ENCODE measurements at regions of chr3 and their contacts with region 1.

Region 1: DNA sequence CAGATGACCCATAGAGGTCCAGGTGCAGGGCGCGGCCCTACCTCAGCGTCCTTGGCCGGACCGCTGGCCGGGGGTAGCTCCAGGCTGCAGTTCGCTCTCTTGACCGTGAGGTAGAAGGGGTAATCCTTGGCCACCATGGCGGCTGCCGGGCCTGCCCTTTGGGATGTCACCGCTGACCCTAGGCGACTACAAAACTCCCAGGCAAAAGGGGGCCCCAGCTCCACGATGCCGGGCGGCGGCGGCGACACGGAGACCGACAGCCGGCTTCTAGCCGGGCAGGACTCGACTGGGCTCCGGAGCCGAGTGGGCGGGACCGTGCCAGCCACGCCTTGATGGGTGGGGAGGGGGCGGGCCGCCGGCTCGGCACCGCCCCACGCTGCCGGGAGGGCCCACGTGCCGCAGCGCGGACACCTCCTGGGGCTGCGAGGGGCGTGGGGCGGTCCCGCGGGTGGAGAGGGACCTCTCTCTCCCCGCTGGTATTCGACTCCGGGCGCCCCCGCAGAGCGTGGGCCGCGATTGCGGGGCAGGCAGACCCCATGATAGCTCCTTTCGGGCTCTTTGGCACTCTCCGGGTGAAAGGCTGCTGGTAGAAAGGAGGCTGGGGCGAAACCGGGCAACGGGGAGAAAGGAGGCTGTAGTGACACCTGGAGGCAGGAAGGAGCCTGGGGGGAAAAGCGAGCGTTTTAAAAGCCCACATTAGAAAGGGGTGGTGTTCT is at the start of gene ARHGEF3:
- DNase-seq: peak; percentile 87 to 94 (median 91)
- ATAC-seq: peak; percentile 96
- H3K4me3 ChIP-seq: peak within 1 kb of the TSS; percentile 28
- H3K4me1 ChIP-seq: peaks cover 14% of the 10 kb centered on the region
- CTCF ChIP-seq: peak; percentile 31
- total RNA-seq, gene ARHGEF3: 10.1 to 34.5 (median 15.5) TPM

Region 2: DNA sequence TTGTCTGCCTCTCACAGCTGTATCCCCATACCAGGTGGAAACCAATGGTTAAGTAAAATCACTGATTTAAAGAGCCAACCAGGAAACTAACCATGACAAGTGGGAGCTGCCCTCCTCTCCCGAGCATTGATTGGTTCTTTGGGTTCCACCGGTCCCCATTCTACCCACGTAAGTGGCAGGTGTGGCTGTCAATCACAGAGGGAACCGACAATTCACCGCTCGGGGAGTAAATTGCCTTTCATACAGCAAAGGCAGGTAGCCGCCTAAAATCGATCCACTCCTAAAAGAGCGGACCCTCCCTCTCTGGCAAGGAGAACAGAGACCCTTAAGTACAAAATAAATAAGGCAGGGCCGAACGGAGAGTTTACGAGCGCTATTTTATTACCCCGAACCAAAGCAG is 334.7 kb before region 1 on chr3:
- intact Hi-C with region 1: no loop called
- DNase-seq: peak; percentile 61 to 80 (median 76)
- ATAC-seq: peak; percentile 94
- H3K4me3 ChIP-seq: no peak overlapping the region
- H3K4me1 ChIP-seq: peaks cover 3% of the 10 kb centered on the region
- CTCF ChIP-seq: no peak

Region 3: GRCh38 chr3:56694867-56695683 is 106.7 kb before region 1 on chr3:
- intact Hi-C with region 1: loop called (anchors 5 kb)
- DNase-seq: no peak
- ATAC-seq: peak; percentile 44
- H3K4me3 ChIP-seq: no peak overlapping the region
- H3K4me1 ChIP-seq: no peaks in the 10 kb centered on the region
- CTCF ChIP-seq: no peak

Region 4: DNA sequence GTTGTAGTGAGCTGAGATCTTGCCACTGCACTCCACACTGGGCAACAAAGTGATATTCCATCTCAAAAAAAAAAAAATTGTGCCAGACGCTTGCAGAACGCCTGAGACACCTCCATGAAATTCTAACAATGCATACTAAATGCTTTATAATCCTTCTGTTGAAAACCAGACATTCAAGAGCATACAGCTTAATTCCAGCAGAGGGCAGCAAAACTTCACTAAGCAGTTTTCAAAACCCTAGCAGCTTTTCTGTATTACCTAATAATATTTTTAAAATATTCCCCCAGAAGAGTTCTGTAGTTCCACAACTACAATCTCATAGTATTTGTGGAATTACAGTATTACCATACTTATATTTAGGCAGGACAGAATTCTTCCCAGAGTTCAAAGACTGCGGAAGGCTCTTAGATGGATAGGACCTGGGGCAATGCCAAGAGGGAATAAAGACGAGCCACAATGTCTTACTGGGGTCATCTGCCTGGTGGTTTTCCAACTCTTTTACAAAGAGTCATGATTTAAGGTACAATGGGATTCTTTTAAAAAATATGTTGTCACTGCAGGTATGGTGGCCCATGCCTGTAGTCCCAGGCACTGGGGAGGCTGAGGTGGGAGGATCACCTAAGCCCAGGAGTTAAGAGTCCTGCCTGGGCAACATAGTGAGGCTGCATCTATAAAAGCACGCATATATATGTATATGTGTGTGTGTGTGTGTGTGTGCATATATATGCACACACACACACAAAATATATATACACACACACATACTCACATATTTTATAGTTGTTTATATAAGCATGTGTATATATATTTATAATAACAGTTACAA is 99.1 kb before region 1 on chr3:
- intact Hi-C with region 1: loop called (anchors 5 kb)
- DNase-seq: peak in 1 of 3 donors; percentile 83
- ATAC-seq: peak; percentile 75
- H3K4me3 ChIP-seq: no peak overlapping the region
- H3K4me1 ChIP-seq: no peaks in the 10 kb centered on the region
- CTCF ChIP-seq: peak; percentile 45

Region 5: DNA sequence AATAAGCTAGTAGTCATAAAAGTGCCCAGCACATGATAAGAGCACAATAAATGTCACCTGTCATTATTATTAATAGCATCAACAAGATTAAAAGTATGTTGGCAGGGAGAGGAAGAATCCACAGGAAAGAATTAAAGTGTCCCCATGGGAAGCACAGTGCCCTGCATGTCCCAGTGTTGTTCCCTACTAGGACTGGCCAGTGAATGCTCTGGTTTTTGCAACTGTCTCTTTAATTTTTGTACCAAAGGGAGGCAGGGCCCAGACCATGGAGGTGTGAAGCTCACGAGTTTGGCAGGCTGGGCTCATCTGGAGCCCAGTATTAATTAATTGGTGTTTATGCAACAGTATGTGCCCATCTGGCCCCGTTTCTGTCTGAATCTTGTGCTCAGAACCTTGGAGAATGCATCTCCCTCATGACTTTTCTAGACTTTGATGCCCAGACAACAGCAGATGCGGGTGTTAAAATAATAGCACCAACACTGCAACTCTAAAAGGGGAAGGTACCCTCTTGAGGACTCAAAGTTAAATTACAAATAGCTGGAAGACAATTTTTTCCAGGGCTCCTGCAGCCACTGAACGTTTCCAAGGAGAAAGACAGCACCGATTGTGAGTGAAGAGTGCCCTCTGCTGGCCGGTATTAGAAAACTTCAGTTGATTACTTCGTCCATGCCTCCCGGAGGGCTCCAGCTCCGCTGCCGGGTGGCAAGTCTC is 186.8 kb after region 1 on chr3:
- intact Hi-C with region 1: loop called (anchors 10 kb)
- DNase-seq: peak in 2 of 3 donors; percentile 67 to 84
- ATAC-seq: peak; percentile 73
- H3K4me3 ChIP-seq: no peak overlapping the region
- H3K4me1 ChIP-seq: peaks cover 30% of the 10 kb centered on the region
- CTCF ChIP-seq: peak; percentile 42

Region 6: DNA sequence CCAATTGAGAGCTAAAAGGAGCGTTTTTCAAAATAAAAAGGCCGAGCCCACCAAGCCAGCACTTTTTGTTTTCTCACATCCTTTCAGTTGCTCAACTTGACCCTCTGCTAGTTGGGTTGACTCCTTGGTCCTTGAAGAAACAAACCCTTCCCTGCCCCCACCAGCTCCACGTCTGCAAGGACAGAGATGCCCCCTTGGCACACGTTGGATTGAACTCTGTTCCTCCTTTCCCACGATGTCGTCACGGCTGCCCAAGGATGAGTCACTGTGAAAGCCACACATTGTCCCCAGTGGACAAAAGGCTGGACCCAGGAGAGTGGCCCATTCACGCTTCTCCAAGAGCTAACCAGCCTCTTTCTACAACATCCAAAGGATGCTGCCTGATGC is 215.6 kb after region 1 on chr3:
- intact Hi-C with region 1: no loop called
- DNase-seq: no peak
- ATAC-seq: no peak
- H3K4me3 ChIP-seq: no peak overlapping the region
- H3K4me1 ChIP-seq: no peaks in the 10 kb centered on the region
- CTCF ChIP-seq: no peak